H1 (cell line): ENCODE measurements at regions of chr7 and their contacts with region 1.

Region 1: DNA sequence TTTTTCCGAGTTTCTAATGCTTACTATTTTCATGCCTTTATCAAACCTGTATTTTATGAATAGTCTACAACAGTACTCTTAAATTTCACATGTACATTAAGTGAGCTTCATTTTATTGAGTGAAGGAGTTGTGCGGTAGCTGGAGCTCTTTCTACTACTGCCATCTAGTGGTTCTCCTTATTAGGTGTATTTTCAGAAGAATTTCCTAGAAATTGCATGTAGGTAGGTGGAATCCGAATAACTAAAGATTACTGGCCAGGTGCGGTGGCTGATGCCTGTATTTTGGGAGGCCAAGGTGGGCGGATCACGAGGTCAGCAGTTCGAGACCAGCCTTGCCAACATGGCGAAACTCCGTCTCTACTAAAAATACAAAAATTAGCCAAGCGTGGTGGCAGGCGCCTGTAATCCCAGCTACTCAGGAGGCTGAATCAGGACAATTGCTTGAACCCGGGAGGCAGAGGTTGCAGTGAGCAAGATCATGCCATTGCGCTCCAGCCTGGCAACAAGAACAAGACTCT is 38.3 kb downstream of the LRRC72 start:
- DNase-seq: no peak
- H3K4me3 ChIP-seq: no peak overlapping the region
- H3K27ac ChIP-seq: no peak overlapping the region
- H3K4me1 ChIP-seq: no peaks in the 10 kb centered on the region
- H3K27me3 ChIP-seq: no peaks in the 10 kb centered on the region
- CTCF ChIP-seq: peak in 2 of 3 experiments; percentile 59 to 60; a peak in 3 of 4 replicates
- EP300 ChIP-seq: 0 out of 3 replicates have a peak, but pooled peaks of 1 of the 2 experiments have one; percentile 23
- POLR2A ChIP-seq: no peak
- RAD21 ChIP-seq: peak; percentile 86

Region 2: GRCh38 chr7:16078076-16078952 is 486.7 kb before region 1 on chr7:
- CTCF ChIA-PET with region 1: interaction called, 14 read pairs
- POLR2A ChIA-PET with region 1: no interaction called
- DNase-seq: no peak
- H3K4me3 ChIP-seq: no peak overlapping the region
- H3K27ac ChIP-seq: no peak overlapping the region
- H3K4me1 ChIP-seq: peaks cover 0 to 2% (median 0%) of the 10 kb centered on the region in 4 experiments; a peak in 1 of 7 replicates
- H3K27me3 ChIP-seq: no peaks in the 10 kb centered on the region
- CTCF ChIP-seq: peak in 2 of 3 experiments; percentile 47 to 64; a peak in 2 of 4 replicates
- EP300 ChIP-seq: no peak
- POLR2A ChIP-seq: no peak
- RAD21 ChIP-seq: peak; percentile 76 to 80

Region 3: DNA sequence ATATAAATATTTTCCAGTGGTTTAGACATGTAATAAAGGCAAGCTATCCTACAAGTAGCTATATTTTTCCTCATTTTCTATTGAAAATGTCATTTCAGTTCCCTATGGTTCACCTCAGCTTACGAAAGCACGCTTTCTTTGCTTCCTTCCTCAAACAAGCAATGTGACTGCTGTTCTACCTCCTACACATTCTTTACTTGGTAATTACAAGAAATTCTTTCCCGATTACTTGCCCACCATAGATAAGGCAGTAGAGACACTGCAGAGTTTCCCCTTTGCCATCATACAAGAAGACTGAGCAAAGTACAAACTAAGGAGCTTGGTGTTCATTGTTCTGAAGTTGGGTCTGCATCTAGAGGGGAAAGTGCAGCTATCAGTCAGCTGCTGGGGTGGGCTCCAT is 393.0 kb before region 1 on chr7:
- CTCF ChIA-PET with region 1: no interaction called
- POLR2A ChIA-PET with region 1: no interaction called
- DNase-seq: no peak
- H3K4me3 ChIP-seq: no peak overlapping the region
- H3K27ac ChIP-seq: no peak overlapping the region
- H3K4me1 ChIP-seq: no peaks in the 10 kb centered on the region
- H3K27me3 ChIP-seq: no peaks in the 10 kb centered on the region
- CTCF ChIP-seq: no peak
- EP300 ChIP-seq: no peak
- POLR2A ChIP-seq: no peak
- RAD21 ChIP-seq: no peak

Region 4: DNA sequence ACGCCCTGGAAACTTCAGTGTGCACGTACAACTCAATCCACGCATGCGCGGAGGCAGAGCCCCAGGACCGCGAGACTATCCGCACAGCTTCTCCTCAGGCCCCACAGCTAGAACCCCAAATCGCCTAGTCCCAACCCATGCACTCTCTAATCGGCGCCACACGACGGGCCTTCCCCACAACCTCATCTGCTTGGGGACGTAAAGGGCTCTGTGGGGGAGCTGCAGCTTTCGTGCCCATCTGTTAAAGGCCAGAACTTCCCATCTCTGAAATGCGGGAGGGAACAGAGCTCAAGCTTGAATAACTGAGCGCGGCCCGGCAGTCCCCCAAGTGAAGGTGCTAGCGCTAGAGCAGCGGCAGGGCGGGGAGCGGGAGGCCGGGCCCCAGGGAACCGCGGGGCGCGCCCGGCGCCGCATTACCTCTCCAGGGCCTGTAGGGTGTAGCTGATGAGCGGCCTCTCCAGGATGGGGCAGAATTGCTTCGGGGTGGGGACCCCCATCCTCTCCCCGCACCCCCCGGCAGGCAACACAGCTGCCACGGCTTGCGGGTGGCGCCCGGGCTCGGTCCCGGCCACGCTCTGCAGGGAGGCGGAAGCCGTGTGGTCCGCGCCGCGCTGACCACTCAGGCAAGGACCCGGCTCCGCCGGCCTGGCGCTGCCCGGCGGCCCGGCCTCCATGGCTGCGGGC is 144.2 kb before region 1 on chr7:
- CTCF ChIA-PET with region 1: interaction called, 12 read pairs
- POLR2A ChIA-PET with region 1: interaction called, 5 read pairs
- DNase-seq: peak; percentile 47 to 80
- H3K4me3 ChIP-seq: peak overlapping the region; percentile 55 to 81 (median 72)
- H3K27ac ChIP-seq: no peak overlapping the region
- H3K4me1 ChIP-seq: peaks cover 0 to 5% (median 2%) of the 10 kb centered on the region in 4 experiments; a peak in 1 of 7 replicates
- H3K27me3 ChIP-seq: peaks cover 0 to 10% (median 4%) of the 10 kb centered on the region in 4 experiments; a peak in 3 of 7 replicates
- CTCF ChIP-seq: peak in 2 of 3 experiments; percentile 16 to 25; a peak in 3 of 4 replicates
- EP300 ChIP-seq: 0 out of 3 replicates have a peak, but pooled peaks of 1 of the 2 experiments have one; percentile 20
- POLR2A ChIP-seq: peak; percentile 37 to 61
- RAD21 ChIP-seq: peak; percentile 19 to 25; a peak in 2 of 4 replicates

Region 5: GRCh38 chr7:16431646-16432424 is 133.1 kb before region 1 on chr7:
- CTCF ChIA-PET with region 1: interaction called, 54 read pairs
- POLR2A ChIA-PET with region 1: interaction called, 3 read pairs
- DNase-seq: no peak
- H3K4me3 ChIP-seq: no peak overlapping the region
- H3K27ac ChIP-seq: no peak overlapping the region
- H3K4me1 ChIP-seq: no peaks in the 10 kb centered on the region
- H3K27me3 ChIP-seq: peaks cover 0 to 1% (median 0%) of the 10 kb centered on the region in 4 experiments; a peak in 1 of 7 replicates
- CTCF ChIP-seq: peak in 2 of 3 experiments; percentile 59 to 87; a peak in 3 of 4 replicates
- EP300 ChIP-seq: no peak
- POLR2A ChIP-seq: no peak
- RAD21 ChIP-seq: peak; percentile 72 to 79

Region 6: DNA sequence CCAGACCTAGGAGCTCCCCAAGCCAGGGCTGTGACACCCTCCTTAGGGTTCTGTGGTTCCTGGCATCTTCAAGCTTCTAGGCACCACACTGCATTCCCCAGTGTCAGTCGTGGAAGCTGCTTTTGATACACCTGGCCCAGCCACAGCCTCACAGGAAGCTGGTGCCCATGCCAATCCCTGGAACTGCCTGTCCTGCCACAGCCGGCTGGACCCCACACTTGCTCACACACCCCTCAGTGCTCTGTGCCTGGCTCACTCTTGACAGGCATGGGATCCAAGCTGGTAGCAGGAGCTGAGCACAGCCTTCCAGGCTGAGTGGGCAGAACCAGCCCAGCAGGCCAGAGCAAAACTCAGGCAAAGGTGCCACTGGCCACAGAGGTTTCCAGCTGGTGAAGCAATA is 16.5 kb before region 1 on chr7:
- CTCF ChIA-PET with region 1: interaction called, 17 read pairs
- POLR2A ChIA-PET with region 1: no interaction called
- DNase-seq: no peak
- H3K4me3 ChIP-seq: no peak overlapping the region
- H3K27ac ChIP-seq: no peak overlapping the region
- H3K4me1 ChIP-seq: 0 out of 7 replicates have a peak, but pooled peaks cover 0 to 2% (median 0%) of the 10 kb centered on the region in 4 experiments
- H3K27me3 ChIP-seq: no peaks in the 10 kb centered on the region
- CTCF ChIP-seq: no peak
- EP300 ChIP-seq: no peak
- POLR2A ChIP-seq: no peak
- RAD21 ChIP-seq: no peak

Region 7: GRCh38 chr7:16609842-16610450 is 45.0 kb after region 1 on chr7:
- CTCF ChIA-PET with region 1: no interaction called
- POLR2A ChIA-PET with region 1: no interaction called
- DNase-seq: no peak
- H3K4me3 ChIP-seq: no peak overlapping the region
- H3K27ac ChIP-seq: no peak overlapping the region
- H3K4me1 ChIP-seq: no peaks in the 10 kb centered on the region
- H3K27me3 ChIP-seq: no peaks in the 10 kb centered on the region
- CTCF ChIP-seq: no peak
- EP300 ChIP-seq: no peak
- POLR2A ChIP-seq: no peak
- RAD21 ChIP-seq: no peak